Activated CD4-positive, alpha-beta T cell treated with anti-CD3 and anti-CD28 coated beads, Interleukin-2, amount 10 ng/mL, durations not matched to agents 24 days and 14 days (primary cell): ENCODE measurements at regions of chr6 and their contacts with region 1.

Region 1: GRCh38 chr6:13787137-13787536 is 27.2 kb downstream of the MCUR1 start:
- DNase-seq: no peak
- H3K4me3 Mint-ChIP-seq: peak overlapping the region; percentile 38
- H3K27ac Mint-ChIP-seq: peak overlapping the region; percentile 80
- H3K4me1 Mint-ChIP-seq: peaks cover 26% of the 10 kb centered on the region
- H3K27me3 Mint-ChIP-seq: no peaks in the 10 kb centered on the region

Region 2: GRCh38 chr6:13725570-13725969 is 61.6 kb before region 1 on chr6:
- intact Hi-C with region 1: loop called (anchors 1 kb)
- DNase-seq: peak; percentile 60
- H3K4me3 Mint-ChIP-seq: peak overlapping the region; percentile 47
- H3K27ac Mint-ChIP-seq: peak overlapping the region; percentile 70
- H3K4me1 Mint-ChIP-seq: peaks cover 25% of the 10 kb centered on the region
- H3K27me3 Mint-ChIP-seq: no peaks in the 10 kb centered on the region

Region 3: DNA sequence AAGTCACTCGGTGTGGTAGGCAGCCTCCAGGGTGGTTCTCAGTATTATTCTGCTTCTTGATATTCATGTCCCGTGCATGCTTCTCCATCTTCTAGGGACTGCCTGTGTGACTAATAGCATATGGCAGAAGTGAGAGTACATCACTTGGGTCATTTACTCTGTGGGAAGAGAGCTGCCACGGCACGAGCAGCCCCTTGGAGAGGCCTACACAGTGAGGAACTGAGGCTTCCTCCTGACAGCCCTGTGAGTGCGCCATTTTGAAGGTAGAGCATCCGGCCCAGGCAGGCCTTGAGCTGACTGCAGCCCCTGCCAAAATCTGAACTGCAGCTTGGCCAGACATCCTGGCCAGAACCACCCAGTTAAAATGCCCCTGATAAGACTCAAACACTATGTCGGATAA is 44.5 kb after region 1 on chr6:
- intact Hi-C with region 1: no loop called
- DNase-seq: no peak
- H3K4me3 Mint-ChIP-seq: no peak overlapping the region
- H3K27ac Mint-ChIP-seq: no peak overlapping the region
- H3K4me1 Mint-ChIP-seq: peaks cover 3% of the 10 kb centered on the region
- H3K27me3 Mint-ChIP-seq: peaks cover 11% of the 10 kb centered on the region

Region 4: GRCh38 chr6:13923527-13924145 is 136.5 kb after region 1 on chr6:
- intact Hi-C with region 1: no loop called
- DNase-seq: no peak
- H3K4me3 Mint-ChIP-seq: peak overlapping the region; percentile 84
- H3K27ac Mint-ChIP-seq: no peak overlapping the region
- H3K4me1 Mint-ChIP-seq: peaks cover 13% of the 10 kb centered on the region
- H3K27me3 Mint-ChIP-seq: peaks cover 68% of the 10 kb centered on the region